H1 (cell line): ENCODE measurements at regions of chr7 and their contacts with region 1.

Region 1: DNA sequence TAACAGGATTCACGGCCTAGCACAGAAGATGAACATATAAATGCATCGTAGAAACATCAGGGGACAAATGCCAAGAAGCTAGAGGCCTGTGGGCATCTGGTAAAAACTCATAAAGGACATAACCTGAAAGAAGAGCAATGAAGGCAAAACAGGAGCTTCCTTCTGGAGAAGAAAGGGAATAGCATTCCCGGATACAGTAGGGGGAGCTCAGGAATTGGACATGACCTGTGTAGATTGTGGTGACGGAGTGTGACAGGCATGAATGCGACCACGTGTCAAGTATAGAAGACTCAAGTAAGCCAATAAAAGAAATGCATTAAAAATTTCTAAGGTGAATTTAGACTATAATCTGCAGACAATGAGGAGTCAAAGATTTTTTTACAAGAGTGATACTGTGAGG is 270.1 kb downstream of the AGMO start:
- DNase-seq: no peak
- H3K4me3 ChIP-seq: no peak overlapping the region
- H3K27ac ChIP-seq: no peak overlapping the region
- H3K4me1 ChIP-seq: no peaks in the 10 kb centered on the region
- H3K27me3 ChIP-seq: no peaks in the 10 kb centered on the region
- CTCF ChIP-seq: peak in 2 of 3 experiments; percentile 16 to 20; a peak in 1 of 4 replicates
- EP300 ChIP-seq: no peak
- POLR2A ChIP-seq: no peak
- RAD21 ChIP-seq: peak; percentile 42 to 50

Region 2: GRCh38 chr7:15280078-15280733 is 11.5 kb before region 1 on chr7:
- CTCF ChIA-PET with region 1: interaction called, 10 read pairs
- POLR2A ChIA-PET with region 1: no interaction called
- DNase-seq: peak in 1 of 2 experiments; percentile 45
- H3K4me3 ChIP-seq: no peak overlapping the region
- H3K27ac ChIP-seq: no peak overlapping the region
- H3K4me1 ChIP-seq: no peaks in the 10 kb centered on the region
- H3K27me3 ChIP-seq: no peaks in the 10 kb centered on the region
- CTCF ChIP-seq: peak in 2 of 3 experiments; percentile 21 to 23; a peak in 2 of 4 replicates
- EP300 ChIP-seq: no peak
- POLR2A ChIP-seq: no peak
- RAD21 ChIP-seq: peak; percentile 33 to 51; a peak in 3 of 4 replicates

Region 3: GRCh38 chr7:15305002-15305600 is 13.4 kb after region 1 on chr7:
- CTCF ChIA-PET with region 1: interaction called, 10 read pairs
- POLR2A ChIA-PET with region 1: no interaction called
- DNase-seq: no peak
- H3K4me3 ChIP-seq: no peak overlapping the region
- H3K27ac ChIP-seq: no peak overlapping the region
- H3K4me1 ChIP-seq: no peaks in the 10 kb centered on the region
- H3K27me3 ChIP-seq: no peaks in the 10 kb centered on the region
- CTCF ChIP-seq: peak in 2 of 3 experiments; percentile 63 to 64; a peak in 3 of 4 replicates
- EP300 ChIP-seq: no peak
- POLR2A ChIP-seq: no peak
- RAD21 ChIP-seq: peak; percentile 82

Region 4: DNA sequence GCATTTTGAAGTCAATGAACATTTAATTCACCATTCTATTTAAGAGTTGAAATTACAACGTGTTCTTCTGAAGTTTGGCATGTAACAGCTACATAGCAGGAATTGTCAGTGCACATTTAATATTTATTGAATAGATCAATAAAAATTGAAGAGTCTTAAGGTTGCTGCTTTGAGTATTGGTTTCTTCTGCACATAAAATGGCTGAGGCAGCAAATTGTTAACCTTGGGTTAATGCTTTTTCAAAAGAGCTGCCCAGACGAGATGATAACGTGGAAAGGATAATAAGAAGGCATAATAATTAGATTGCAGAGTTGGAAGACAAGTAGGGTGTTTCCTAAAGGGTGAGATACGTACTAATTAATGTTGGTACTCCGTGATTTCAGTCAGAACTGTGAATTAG is 66.4 kb after region 1 on chr7:
- CTCF ChIA-PET with region 1: no interaction called
- POLR2A ChIA-PET with region 1: no interaction called
- DNase-seq: no peak
- H3K4me3 ChIP-seq: no peak overlapping the region
- H3K27ac ChIP-seq: no peak overlapping the region
- H3K4me1 ChIP-seq: peaks cover 0 to 4% (median 1%) of the 10 kb centered on the region in 4 experiments; a peak in 3 of 7 replicates
- H3K27me3 ChIP-seq: no peaks in the 10 kb centered on the region
- CTCF ChIP-seq: no peak
- EP300 ChIP-seq: no peak
- POLR2A ChIP-seq: no peak
- RAD21 ChIP-seq: no peak